Dorsolateral prefrontal cortex (tissue), 120 donors: ENCODE measurements at regions of chr7 and their contacts with region 1.

Region 1: DNA sequence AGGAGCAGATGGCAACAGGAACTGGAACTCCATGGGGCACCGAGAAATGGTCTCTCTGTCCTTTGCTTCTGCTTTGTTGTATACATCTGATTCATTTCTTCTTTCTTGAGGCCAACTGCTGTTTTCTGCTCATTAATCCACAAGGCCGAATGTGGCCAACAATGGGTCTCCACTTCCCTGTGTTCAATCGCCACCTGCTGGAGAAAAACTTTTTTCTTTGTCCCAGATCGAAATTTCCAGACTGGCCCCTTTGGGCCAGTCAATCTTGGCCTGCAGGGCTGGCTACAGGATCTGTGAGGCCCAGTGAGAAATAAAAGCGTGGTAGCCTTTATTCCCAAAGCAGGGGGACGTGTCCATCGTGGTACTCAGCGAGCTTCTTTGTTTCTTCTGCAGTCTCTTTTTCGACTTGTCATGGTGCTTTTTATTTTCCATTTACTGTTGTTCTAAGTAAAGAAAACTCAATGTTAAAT is 58.8 kb downstream of the PARP12 start:
- DNase-seq: no peak
- H3K4me3 ChIP-seq: no peak overlapping the region
- H3K27ac ChIP-seq: peak overlapping the region in 2 of 59 donors; percentile 13 to 21
- H3K27me3 ChIP-seq: no peaks in the 10 kb centered on the region
- CTCF ChIP-seq: peak in 55 of 56 donors; percentile 8 to 68 (median 42)

Region 2: GRCh38 chr7:139505563-139505962 is 498.4 kb before region 1 on chr7:
- intact Hi-C with region 1: loop called in 1 of 2 experiments (anchors 2 kb)
- DNase-seq: no peak
- H3K4me3 ChIP-seq: no peak overlapping the region
- H3K27ac ChIP-seq: no peak overlapping the region
- H3K27me3 ChIP-seq: no peaks in the 10 kb centered on the region
- CTCF ChIP-seq: peak in 12 of 56 donors; percentile 9 to 37 (median 16)

Region 3: DNA sequence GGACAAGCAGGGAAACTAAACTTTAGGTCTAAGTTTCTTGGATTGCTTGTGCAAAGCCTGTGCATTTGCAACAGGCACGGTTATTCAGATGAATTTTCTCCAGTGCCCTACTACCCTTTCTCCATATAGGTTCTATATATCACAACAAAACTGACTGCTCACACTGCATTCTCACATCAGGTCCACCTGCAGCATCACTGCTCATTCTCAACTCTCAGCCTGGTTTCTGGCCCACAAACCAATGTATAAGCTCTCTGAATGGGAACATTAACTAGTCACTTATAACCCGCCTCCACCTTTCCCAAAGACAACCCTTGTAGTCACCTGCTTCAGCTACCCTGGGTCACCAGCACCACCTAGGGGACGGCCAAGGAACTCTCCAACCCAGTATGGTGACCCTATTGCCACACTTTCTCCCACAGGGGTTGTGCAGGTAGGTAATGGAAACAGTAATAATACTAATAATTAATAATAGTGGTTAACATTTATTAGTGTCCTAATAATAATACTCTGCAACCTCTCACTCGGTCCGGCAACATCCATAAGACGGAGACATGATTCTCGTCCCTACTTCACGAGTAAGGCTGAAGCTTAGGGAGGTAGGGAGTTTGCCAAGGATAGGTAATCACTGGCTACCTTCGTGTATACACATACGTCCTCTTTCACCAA is 383.1 kb before region 1 on chr7:
- intact Hi-C with region 1: loop called in 1 of 2 experiments (anchors 5 kb)
- DNase-seq: peak in 1 of 10 donors; percentile 37
- H3K4me3 ChIP-seq: no peak overlapping the region
- H3K27ac ChIP-seq: peak overlapping the region in 6 of 59 donors; percentile 16 to 68 (median 29)
- H3K27me3 ChIP-seq: no peaks in the 10 kb centered on the region
- CTCF ChIP-seq: peak; percentile 23 to 78 (median 61)

Region 4: GRCh38 chr7:139777948-139778841 is 225.8 kb before region 1 on chr7 and contains the start of gene HIPK2:
- intact Hi-C with region 1: loop called (anchors 5 kb)
- DNase-seq: peak; percentile 57 to 83 (median 74)
- H3K4me3 ChIP-seq: peak within 1 kb of the TSS; percentile 73 to 94 (median 86)
- H3K27ac ChIP-seq: peak within 1 kb of the TSS; percentile 81 to 99 (median 96)
- H3K27me3 ChIP-seq: no peaks in the 10 kb centered on the region
- CTCF ChIP-seq: peak in 5 of 56 donors; percentile 2 to 17 (median 13)
- total RNA-seq, gene HIPK2: 106 to 688 (median 242) TPM

Region 5: DNA sequence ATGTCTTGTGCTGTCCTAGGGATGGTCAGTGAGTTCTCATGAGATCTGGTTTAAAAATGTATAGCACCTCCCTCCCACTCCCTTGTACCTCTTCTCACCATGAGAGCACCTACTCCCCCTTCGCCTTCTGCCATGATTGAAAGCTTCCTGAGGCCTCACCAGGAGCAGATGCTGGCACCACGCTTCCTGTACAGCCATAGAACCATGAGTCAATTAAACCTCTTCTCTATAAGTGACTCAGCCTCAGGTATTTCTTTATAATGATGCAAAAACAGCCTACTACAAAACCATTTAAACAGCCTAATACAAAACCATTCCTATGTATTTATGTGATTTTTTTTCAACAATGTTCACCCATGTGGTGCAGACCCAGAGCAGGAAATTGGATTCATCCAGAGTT is 140.9 kb after region 1 on chr7:
- intact Hi-C with region 1: no loop called
- DNase-seq: no peak
- H3K4me3 ChIP-seq: no peak overlapping the region
- H3K27ac ChIP-seq: no peak overlapping the region
- H3K27me3 ChIP-seq: no peaks in the 10 kb centered on the region
- CTCF ChIP-seq: no peak

Region 6: DNA sequence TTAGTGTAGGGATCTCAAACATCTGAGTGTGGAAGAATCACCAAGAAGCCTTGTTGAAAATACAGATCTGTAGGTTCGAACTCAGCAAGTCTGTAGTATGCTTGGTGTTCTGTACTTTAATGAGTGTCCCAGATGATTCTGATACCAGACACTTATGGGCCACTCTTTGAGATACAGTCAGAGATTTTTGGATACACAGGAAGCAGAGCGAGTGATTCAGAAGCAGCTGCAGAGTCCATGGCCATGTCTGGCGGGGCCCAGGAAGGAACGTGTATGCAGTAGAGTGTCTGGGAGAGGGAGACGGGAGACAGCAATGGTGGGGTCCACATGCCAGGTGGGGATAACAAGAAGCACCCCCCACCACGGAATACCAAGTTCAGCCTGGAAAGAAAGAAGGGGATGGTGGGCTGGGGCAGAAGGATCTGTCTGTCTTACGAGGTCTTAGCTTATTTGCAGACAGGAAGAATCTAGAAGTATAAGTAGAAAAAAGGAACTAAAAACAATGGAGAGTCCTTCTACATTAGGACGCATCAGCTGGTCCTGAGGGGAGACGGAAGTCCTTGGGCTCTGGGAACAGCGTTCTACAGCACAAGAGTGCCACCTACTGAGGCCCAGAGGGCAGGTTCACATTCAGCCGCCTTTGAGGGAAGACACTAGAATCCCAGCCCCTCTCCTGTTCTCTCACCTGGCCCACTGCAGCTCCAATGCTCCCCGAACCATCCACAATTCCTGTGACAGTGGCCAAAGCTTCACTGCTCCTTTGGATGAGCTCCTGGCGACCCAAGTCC is 339.0 kb after region 1 on chr7:
- intact Hi-C with region 1: loop called in 1 of 2 experiments (anchors 5 kb)
- DNase-seq: peak in 9 of 10 donors; percentile 38 to 66 (median 59)
- H3K4me3 ChIP-seq: no peak overlapping the region
- H3K27ac ChIP-seq: peak overlapping the region in 3 of 59 donors; percentile 12 to 31 (median 22)
- H3K27me3 ChIP-seq: no peaks in the 10 kb centered on the region
- CTCF ChIP-seq: peak; percentile 25 to 75 (median 63)